CD8-positive, alpha-beta T cell (primary cell): ENCODE measurements at regions of chr10 and their contacts with region 1.

Region 1: DNA sequence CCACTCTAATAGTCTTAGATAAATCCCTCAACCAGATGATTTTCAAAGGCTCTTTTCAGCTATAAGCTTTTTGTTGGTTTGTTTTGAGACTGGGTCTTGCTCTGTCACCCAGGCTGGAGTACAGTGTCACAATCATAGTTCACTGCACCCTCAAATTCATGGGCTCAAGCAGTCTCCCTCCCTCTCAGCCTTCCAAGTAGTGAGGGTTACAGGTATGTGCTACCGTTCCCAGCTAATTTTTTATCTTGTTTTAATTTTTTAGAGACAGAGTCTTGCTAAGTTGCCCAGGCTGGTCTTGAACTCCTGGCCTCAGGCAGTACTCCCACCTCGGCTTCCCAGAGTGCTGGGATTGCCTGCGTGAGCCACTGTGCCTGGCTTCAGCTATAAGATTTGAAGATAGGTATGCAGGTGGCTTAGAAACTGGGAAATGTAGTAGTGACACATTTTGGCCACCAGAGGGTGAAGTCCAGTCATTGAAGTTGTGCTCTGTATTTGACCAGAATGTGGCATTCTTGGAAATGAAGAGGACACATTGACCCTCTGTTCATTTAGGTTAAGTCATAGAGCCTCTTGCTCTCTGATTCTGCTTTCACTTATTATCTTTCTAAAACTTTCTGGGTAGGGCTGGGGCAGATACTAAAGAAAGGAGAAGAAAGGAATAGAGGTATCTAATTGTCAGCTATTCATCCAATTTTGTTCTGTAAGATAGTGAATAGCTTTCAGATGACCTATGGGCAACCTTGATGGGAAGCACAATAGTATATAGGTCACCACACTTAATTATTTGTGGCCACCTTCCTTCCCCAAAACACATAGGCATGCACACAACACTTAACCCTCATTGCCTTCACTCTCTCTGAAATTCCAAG is 36.0 kb downstream of the R3HCC1L start:
- DNase-seq: peak in 4 of 9 experiments; percentile 15 to 57 (median 34)
- ATAC-seq: peak; percentile 54
- H3K4me3 ChIP-seq: no peak overlapping the region
- H3K4me3 Mint-ChIP-seq: no peak overlapping the region
- H3K27ac ChIP-seq: no peak overlapping the region
- H3K27ac Mint-ChIP-seq: peak overlapping the region; percentile 29
- H3K4me1 ChIP-seq: peaks cover 3% of the 10 kb centered on the region
- H3K4me1 Mint-ChIP-seq: peaks cover 27% of the 10 kb centered on the region
- H3K27me3 ChIP-seq: no peaks in the 10 kb centered on the region
- H3K27me3 Mint-ChIP-seq: no peaks in the 10 kb centered on the region
- CTCF ChIP-seq: peak; percentile 84

Region 2: DNA sequence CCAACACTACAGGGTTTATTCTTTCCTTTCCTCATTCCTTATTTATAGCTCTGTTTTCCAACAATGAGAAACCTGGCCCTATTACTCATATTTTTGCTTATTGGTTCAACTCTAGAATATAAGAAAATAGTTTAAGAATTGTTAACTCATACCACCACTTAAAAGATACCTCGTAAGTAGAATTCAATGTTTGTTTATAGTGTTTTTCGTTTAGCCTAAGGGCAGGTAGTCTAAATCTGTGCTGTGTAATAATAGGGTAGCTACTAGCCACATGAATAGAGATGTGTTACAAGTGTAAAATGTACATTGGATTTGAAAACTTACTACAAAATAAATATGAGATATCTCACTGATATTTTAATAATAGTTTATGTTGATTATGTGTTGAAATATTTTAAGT is 10.5 kb before region 1 on chr10:
- CTCF ChIA-PET with region 1: interaction called, 10 read pairs
- POLR2A ChIA-PET with region 1: no interaction called
- intact Hi-C with region 1: no loop called
- DNase-seq: no peak
- ATAC-seq: no peak
- H3K4me3 ChIP-seq: no peak overlapping the region
- H3K4me3 Mint-ChIP-seq: no peak overlapping the region
- H3K27ac ChIP-seq: no peak overlapping the region
- H3K27ac Mint-ChIP-seq: no peak overlapping the region
- H3K4me1 ChIP-seq: peaks cover 4% of the 10 kb centered on the region
- H3K4me1 Mint-ChIP-seq: peaks cover 16% of the 10 kb centered on the region
- H3K27me3 ChIP-seq: no peaks in the 10 kb centered on the region
- H3K27me3 Mint-ChIP-seq: no peaks in the 10 kb centered on the region
- CTCF ChIP-seq: no peak

Region 3: DNA sequence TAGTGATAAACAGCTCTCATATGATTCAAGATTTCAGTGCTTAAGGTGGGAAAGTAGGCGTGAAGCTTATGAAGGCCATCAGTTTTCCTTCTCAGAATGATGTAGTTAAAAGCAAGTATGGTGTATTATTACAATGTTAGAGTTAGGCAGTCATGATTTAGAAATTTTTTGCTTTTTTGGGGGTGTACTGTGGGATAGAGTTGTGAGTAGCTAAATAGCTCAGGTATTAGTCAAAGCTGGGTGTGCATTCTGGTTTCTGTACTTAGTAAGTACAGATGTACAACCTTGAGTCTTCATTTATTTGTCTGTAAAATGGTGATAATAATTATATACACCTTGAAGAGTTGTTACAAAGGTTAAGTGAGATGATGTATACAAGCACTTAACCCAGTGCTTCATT is 16.2 kb after region 1 on chr10:
- CTCF ChIA-PET with region 1: interaction called, 15 read pairs
- POLR2A ChIA-PET with region 1: no interaction called
- intact Hi-C with region 1: no loop called
- DNase-seq: no peak
- ATAC-seq: no peak
- H3K4me3 ChIP-seq: no peak overlapping the region
- H3K4me3 Mint-ChIP-seq: no peak overlapping the region
- H3K27ac ChIP-seq: no peak overlapping the region
- H3K27ac Mint-ChIP-seq: no peak overlapping the region
- H3K4me1 ChIP-seq: no peaks in the 10 kb centered on the region
- H3K4me1 Mint-ChIP-seq: peaks cover 25% of the 10 kb centered on the region
- H3K27me3 ChIP-seq: no peaks in the 10 kb centered on the region
- H3K27me3 Mint-ChIP-seq: no peaks in the 10 kb centered on the region
- CTCF ChIP-seq: no peak

Region 4: GRCh38 chr10:98309366-98310355 is 139.2 kb after region 1 on chr10:
- CTCF ChIA-PET with region 1: interaction called, 17 read pairs
- POLR2A ChIA-PET with region 1: no interaction called
- intact Hi-C with region 1: no loop called
- DNase-seq: peak in 2 of 9 experiments; percentile 26 to 36
- ATAC-seq: no peak
- H3K4me3 ChIP-seq: no peak overlapping the region
- H3K4me3 Mint-ChIP-seq: no peak overlapping the region
- H3K27ac ChIP-seq: no peak overlapping the region
- H3K27ac Mint-ChIP-seq: no peak overlapping the region
- H3K4me1 ChIP-seq: no peaks in the 10 kb centered on the region
- H3K4me1 Mint-ChIP-seq: no peaks in the 10 kb centered on the region
- H3K27me3 ChIP-seq: peaks cover 0 to 5% of the 10 kb centered on the region in 2 experiments
- H3K27me3 Mint-ChIP-seq: peaks cover 34% of the 10 kb centered on the region
- CTCF ChIP-seq: no peak